ENCODE measurements at regions of chr19 and their contacts with region 1.

Region 1: GRCh38 chr19:16382775-16383543 is 58.3 kb downstream of the KLF2 start:
- DNase-seq: peak; percentile 82 to 87 (median 85)
- ATAC-seq: peak; percentile 86 to 93 (median 88)
- H3K4me3 ChIP-seq: no peak overlapping the region
- H3K27ac ChIP-seq: peak overlapping the region in 2 of 3 donors; percentile 47 to 55
- H3K4me1 ChIP-seq: no peaks in the 10 kb centered on the region
- H3K27me3 ChIP-seq: no peaks in the 10 kb centered on the region
- CTCF ChIP-seq: peak; percentile 73 to 88 (median 86)
- POLR2A ChIP-seq: no peak

Region 2: GRCh38 chr19:16247353-16248182 is 135.4 kb before region 1 on chr19:
- intact Hi-C with region 1: loop called (anchors 5 kb)
- DNase-seq: peak; percentile 85 to 88 (median 86)
- ATAC-seq: peak; percentile 97 to 99 (median 98)
- H3K4me3 ChIP-seq: no peak overlapping the region
- H3K27ac ChIP-seq: no peak overlapping the region
- H3K4me1 ChIP-seq: no peaks in the 10 kb centered on the region
- H3K27me3 ChIP-seq: no peaks in the 10 kb centered on the region
- CTCF ChIP-seq: peak; percentile 86 to 95 (median 94)
- POLR2A ChIP-seq: no peak

Region 3: DNA sequence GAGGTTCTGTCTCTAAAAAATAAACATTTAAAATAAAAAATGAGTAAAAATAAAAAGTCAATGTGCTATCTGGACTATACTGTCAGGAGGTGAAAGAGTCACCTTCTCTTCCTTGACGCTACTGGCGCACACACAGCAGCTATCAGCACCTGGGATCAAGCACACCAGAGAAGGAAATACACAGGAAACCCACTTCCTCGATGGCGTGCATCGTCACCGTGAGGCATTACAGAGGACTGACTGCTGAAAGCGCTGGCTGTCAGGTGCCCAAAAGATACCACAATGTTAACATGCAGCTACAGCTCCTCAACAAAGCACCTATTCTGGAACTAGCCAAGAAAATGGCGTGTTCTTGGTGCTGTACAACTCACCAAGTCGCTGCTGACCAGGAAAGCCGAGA is 183.2 kb after region 1 on chr19:
- intact Hi-C with region 1: no loop called
- DNase-seq: no peak
- ATAC-seq: peak; percentile 46 to 61 (median 54)
- H3K4me3 ChIP-seq: no peak overlapping the region
- H3K27ac ChIP-seq: no peak overlapping the region
- H3K4me1 ChIP-seq: peaks cover 0 to 3% (median 0%) of the 10 kb centered on the region in 4 donors
- H3K27me3 ChIP-seq: no peaks in the 10 kb centered on the region
- CTCF ChIP-seq: no peak
- POLR2A ChIP-seq: no peak

Region 4: GRCh38 chr19:16637535-16637934 is 254.6 kb after region 1 on chr19:
- intact Hi-C with region 1: no loop called
- DNase-seq: no peak
- ATAC-seq: peak in 1 of 4 donors; percentile 81
- H3K4me3 ChIP-seq: no peak overlapping the region
- H3K27ac ChIP-seq: no peak overlapping the region
- H3K4me1 ChIP-seq: peaks cover 0 to 3% (median 0%) of the 10 kb centered on the region in 4 donors
- H3K27me3 ChIP-seq: no peaks in the 10 kb centered on the region
- CTCF ChIP-seq: no peak
- POLR2A ChIP-seq: no peak

Measured in right lobe of liver (tissue), 6 donors.